ENCODE measurements at regions of chr6 and their contacts with region 1.

Region 1: DNA sequence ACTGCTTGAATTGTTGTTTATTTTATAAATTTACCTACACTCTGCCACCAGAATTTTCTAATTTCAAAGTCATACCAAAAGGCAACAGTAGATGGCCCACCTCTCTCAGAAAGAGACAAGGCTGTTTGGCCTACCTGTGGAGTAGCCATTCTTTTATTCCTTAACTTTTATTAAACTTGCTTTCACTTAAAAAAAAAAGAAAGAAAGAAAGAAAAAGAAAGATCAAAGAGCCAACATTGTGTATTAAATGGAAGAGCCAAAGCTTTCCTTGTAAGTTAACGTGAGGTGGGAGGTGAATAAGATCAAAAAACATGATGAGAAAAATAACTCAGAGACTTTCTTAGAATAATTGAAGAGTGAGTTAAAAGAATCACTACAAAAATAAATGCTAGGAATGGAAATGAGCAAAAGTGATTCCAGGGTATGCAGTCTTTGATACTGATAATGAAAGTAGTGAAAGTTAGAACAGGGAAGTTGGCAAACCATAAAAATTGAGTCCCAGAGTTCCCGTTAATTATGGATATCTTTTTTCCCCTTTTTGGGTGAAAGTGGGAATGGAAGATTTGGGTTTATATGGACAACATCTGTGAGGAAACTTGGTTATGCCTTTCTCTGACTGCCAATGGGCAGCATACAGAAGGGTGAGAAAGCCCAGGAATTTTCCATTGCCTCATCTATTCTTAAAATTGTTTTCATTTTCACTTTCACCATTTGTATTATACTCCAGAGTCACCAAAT is 35.9 kb upstream of the MYB start:
- DNase-seq: no peak
- ATAC-seq: peak; percentile 78
- H3K4me3 Mint-ChIP-seq: peak overlapping the region; percentile 62
- H3K27ac Mint-ChIP-seq: peak overlapping the region; percentile 88
- H3K4me1 Mint-ChIP-seq: peaks cover 65% of the 10 kb centered on the region
- H3K27me3 Mint-ChIP-seq: no peaks in the 10 kb centered on the region

Region 2: DNA sequence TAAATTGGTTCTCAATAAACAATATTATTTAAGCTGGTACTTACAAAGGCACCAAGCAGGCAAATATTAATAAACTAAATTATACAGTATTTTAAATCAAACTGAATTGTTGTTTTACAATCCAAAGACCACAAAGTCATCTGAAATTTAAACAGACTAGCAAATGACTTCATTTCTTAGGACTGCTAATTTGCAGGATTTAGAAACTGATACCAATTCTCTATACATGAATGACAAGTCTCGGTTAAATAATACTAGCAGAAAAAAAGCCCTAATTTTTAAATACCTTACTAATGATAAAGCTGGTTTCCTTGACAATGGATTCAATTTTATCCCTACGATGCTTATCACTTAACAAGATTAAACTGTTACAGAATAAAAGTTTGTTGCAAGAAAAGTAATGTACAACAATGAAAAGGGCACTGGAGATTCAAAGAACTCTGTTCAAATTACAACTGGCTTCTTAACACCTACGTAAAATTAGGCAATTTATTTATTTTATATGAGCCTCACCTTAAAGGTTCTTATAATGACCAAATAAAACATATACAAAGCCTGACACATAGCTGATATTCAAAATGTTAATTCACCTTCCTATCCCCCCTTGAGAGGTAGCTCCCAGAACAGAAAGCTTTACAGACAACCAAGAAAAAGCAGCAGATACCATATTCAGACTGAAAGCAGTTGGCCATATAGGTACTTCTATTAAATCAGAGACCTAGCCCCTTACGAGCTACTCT is 123.8 kb before region 1 on chr6:
- CTCF ChIA-PET with region 1: no interaction called
- DNase-seq: no peak
- ATAC-seq: peak; percentile 42
- H3K4me3 Mint-ChIP-seq: peak overlapping the region; percentile 15
- H3K27ac Mint-ChIP-seq: peak overlapping the region; percentile 75
- H3K4me1 Mint-ChIP-seq: peaks cover 48% of the 10 kb centered on the region
- H3K27me3 Mint-ChIP-seq: no peaks in the 10 kb centered on the region

Region 3: DNA sequence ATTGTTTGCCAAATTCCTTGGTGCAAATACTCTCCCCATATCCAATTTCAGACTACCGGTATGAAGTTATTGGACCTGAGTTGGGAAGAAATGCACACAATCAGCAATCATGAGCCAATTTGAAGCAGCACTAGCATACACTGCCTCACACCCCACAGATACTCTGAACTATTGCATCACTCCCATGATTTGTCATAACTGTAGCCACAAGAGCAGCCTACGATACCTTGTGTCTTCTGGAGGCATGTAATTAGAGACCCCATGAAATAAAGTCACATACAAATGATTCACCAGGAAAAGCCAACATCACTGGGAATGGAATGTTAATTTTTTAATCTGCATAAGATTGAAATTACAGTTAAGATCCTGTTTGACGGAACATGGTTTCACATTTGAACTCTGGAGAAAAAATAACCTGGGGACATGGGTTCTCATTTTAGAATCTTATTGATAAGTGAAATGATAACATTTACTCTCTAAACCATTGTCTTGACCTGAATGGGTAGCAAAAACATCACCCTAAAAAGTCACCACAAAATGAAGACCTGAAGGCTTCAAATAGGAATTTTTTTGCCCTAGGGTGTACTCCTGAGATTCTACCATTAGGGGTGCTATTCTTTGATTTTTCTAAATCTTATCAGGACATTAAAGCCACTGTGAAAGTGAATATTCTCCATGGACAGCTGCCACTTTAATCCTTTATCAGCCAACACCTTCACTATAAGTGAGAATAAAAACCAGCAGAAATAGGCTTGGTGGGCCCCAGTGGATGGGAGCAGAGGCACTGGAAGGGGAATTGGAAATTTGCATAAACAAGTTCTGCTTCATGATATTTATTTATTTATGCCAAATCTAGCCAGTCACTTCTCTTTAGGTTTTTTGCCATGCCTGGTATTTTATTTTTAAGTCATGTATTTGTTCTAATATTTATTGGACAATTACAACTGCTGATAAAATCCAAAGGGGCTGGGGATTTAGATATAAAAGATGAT is 56.1 kb before region 1 on chr6:
- CTCF ChIA-PET with region 1: interaction called, 21 read pairs
- DNase-seq: peak; percentile 79
- ATAC-seq: peak; percentile 87
- H3K4me3 Mint-ChIP-seq: peak overlapping the region; percentile 71
- H3K27ac Mint-ChIP-seq: peak overlapping the region; percentile 89
- H3K4me1 Mint-ChIP-seq: peaks cover 84% of the 10 kb centered on the region
- H3K27me3 Mint-ChIP-seq: no peaks in the 10 kb centered on the region

Region 4: GRCh38 chr6:135094403-135094848 is 50.8 kb before region 1 on chr6:
- CTCF ChIA-PET with region 1: interaction called, 13 read pairs
- DNase-seq: peak; percentile 61
- ATAC-seq: peak; percentile 84
- H3K4me3 Mint-ChIP-seq: peak overlapping the region; percentile 31
- H3K27ac Mint-ChIP-seq: peak overlapping the region; percentile 74
- H3K4me1 Mint-ChIP-seq: peaks cover 52% of the 10 kb centered on the region
- H3K27me3 Mint-ChIP-seq: no peaks in the 10 kb centered on the region

Region 5: DNA sequence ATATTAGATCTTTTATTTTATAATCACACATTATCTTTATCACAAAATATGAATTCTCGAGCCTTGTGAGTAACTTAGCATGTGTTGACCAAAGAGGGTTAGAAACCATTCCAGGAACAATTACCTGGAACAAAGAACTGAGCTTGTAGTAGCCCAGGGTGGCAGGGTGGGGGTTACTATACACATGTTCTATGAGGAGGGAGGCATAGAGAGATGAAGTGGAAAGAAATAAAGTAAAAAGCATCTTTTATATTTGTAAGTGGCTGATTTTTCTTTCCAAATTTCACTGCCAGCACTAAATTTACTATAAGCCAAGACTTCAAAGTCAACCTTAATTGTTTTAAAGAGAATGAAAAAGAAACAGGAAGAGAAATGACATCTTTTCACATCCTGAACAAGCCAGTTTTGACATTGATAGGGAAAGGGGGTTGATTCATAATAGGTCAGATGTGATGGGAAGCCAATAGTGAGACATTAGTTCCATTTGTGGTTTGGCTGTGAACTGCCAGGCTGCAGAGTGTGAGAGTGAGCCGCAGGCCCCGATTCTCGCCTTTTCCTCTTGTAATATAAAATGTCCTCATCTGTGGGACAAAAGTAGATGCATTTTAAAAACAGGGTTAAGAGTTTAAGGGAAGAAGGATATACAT is 16.8 kb before region 1 on chr6:
- CTCF ChIA-PET with region 1: interaction called, 29 read pairs
- DNase-seq: peak; percentile 85
- ATAC-seq: peak; percentile 96
- H3K4me3 Mint-ChIP-seq: peak overlapping the region; percentile 65
- H3K27ac Mint-ChIP-seq: peak overlapping the region; percentile 99
- H3K4me1 Mint-ChIP-seq: peaks cover 51% of the 10 kb centered on the region
- H3K27me3 Mint-ChIP-seq: no peaks in the 10 kb centered on the region

Region 6: GRCh38 chr6:135162678-135163439 is 17.6 kb after region 1 on chr6:
- CTCF ChIA-PET with region 1: interaction called, 16 read pairs
- DNase-seq: peak; percentile 77
- ATAC-seq: peak; percentile 24
- H3K4me3 Mint-ChIP-seq: peak overlapping the region; percentile 55
- H3K27ac Mint-ChIP-seq: peak overlapping the region; percentile 87
- H3K4me1 Mint-ChIP-seq: peaks cover 62% of the 10 kb centered on the region
- H3K27me3 Mint-ChIP-seq: no peaks in the 10 kb centered on the region